Ovary (tissue), 10 donors: ENCODE measurements at regions of chr3 and their contacts with region 1.

Region 1: DNA sequence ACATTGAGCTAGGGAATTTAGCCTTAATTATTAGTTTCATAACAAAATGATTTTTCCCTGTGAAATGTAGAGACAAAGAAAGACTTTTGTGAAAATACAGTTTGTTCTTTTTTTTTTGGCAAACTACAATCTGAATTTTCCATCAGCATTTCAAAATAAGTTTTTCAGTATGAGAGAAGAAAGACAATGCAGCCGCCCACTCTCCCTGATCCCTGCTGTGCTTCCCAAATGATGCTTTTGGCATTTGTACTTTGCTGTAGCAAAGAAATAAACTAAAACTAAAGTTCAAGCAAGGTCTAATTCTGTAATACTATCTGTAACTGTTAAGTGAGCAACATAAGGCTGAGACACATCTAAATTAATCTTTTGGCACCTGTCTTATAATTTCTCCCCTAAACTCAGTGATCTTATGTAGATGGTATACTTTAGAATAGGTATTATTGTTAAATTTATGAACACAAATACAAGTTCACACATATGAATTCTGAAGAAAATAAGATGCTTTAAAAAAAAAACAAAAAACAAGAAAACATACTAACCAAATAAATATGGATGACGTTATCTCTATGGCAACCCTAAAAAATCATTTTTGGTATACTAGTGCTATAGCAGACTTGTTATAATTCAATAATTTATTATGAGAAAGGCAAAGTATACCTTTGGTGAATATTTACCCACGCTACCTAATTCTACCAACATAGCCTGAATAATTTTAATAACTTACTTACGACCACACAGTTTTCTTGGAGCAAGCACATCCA is 782.0 kb downstream of the VGLL3 start:
- DNase-seq: no peak
- H3K4me3 ChIP-seq: no peak overlapping the region
- H3K27ac ChIP-seq: no peak overlapping the region
- H3K4me1 ChIP-seq: no peaks in the 10 kb centered on the region
- H3K27me3 ChIP-seq: no peaks in the 10 kb centered on the region
- CTCF ChIP-seq: no peak
- EP300 ChIP-seq: no peak
- POLR2A ChIP-seq: no peak

Region 2: DNA sequence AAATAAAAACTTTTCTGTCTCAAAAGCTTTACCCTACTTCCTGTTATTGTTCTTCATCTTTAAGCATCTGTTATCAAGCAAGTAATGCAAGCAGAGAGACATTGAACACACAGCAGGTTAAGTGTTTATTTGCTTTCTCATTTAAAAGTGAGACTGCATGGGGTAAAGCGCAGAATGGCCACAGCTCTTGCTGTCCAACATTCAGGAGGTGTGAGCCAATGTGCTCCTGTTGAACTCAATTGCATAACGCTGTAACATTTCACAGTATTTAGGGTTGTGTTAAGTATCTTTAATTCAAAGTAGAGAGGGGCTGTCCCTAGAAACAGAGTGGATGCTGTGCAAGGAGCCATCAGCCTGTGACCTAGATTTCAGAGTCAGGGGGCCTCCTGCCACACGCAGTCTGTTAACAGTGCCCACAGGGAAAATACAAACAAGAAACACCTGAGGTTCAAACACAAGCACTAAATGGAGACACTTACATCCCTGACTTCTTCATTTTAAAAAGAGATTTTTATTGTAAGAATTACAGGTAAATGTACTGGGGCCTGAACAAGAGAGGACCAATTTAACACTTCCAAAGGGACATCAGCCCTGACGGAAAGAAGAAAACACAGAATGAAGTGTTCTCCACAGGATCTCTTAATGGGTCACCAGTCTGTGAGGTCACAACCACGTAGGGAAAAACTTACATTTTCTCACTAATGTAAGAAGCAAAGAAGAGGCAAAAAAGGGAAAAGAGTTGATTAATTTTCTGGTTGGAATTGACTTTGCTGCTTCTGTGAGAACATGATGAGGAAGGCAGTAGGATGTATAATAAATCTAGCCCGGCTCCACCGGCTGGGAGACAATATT is 33.1 kb before region 1 on chr3:
- intact Hi-C with region 1: no loop called
- DNase-seq: no peak
- H3K4me3 ChIP-seq: no peak overlapping the region
- H3K27ac ChIP-seq: no peak overlapping the region
- H3K4me1 ChIP-seq: no peaks in the 10 kb centered on the region
- H3K27me3 ChIP-seq: no peaks in the 10 kb centered on the region
- CTCF ChIP-seq: no peak
- EP300 ChIP-seq: no peak
- POLR2A ChIP-seq: no peak

Region 3: DNA sequence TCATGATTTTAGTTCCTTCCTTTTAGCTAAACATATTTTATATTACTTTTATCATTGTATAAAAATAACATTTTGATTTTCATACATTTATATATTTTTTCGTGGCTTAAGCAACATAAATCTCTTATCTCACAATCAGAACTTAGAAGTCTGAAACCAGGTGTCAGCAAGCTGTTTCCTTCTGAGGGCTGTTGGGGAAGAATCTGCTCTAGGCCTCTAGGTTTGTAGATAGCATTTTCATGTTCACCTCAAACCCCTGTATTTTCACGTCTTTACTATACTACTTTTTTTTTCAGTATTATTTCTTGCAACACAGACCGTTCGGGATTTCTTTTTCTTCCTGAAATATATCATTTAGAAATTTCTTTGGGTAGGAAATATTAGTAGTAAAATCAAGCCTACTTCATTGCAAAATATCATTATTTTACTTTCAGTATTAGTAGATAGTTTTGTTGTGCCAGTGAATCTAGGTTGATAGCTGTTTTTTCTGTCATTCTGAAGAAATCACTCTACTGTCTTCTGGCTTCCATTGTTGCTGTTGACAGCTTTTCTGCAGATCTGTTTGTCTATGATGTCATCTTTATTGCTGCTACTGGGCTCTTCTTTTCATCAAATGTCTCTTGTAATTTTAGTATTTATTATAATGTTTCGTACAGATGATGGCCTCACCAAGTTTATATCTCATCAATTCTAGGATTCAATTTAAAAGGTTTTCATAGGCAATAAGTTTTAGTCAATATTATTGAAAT is 25.7 kb after region 1 on chr3:
- intact Hi-C with region 1: loop called in 1 of 4 experiments (anchors 1 kb)
- DNase-seq: no peak
- H3K4me3 ChIP-seq: no peak overlapping the region
- H3K27ac ChIP-seq: no peak overlapping the region
- H3K4me1 ChIP-seq: no peaks in the 10 kb centered on the region
- H3K27me3 ChIP-seq: no peaks in the 10 kb centered on the region
- CTCF ChIP-seq: no peak
- EP300 ChIP-seq: no peak
- POLR2A ChIP-seq: no peak

Region 4: GRCh38 chr3:86388820-86389219 is 179.9 kb after region 1 on chr3:
- intact Hi-C with region 1: no loop called
- DNase-seq: no peak
- H3K4me3 ChIP-seq: no peak overlapping the region
- H3K27ac ChIP-seq: no peak overlapping the region
- H3K4me1 ChIP-seq: no peaks in the 10 kb centered on the region
- H3K27me3 ChIP-seq: no peaks in the 10 kb centered on the region
- CTCF ChIP-seq: no peak
- EP300 ChIP-seq: no peak
- POLR2A ChIP-seq: no peak